CD4-positive, alpha-beta memory T cell (primary cell): ENCODE measurements at regions of chr14 and their contacts with region 1.

Region 1: DNA sequence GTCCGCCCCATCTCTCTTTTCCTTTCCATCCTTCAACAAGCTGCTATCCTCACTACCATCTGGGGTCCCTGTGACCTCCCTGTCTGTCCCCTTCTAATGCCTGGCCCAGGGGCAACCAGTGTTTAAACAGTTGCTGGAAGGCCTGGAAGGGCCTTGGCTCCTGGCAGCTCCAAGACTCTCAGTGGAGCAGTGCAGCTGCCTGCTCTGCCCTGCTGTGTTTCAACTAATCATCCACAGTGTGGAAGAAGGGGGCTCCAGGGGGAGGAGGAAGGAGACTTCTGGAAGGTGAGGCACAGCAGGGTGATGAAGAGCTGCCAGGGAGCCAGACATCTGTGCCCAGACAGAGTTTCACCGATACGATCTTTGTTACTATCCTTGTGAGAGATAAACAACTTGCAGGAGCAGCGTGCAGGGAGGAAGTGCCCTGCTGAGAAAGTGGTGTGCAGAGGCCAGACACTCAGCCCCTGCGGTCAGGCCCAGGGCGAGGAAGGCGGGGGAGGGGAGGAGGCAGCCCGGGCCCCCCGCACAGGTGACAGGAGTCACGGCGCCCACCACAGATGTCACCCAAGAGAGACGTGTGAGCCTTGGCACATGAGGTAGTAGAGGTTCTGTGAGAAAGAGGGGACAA is 1061.8 kb downstream of the BCL11B start:
- DNase-seq: peak in 3 of 5 donors; percentile 34 to 49 (median 36)
- H3K4me3 ChIP-seq: peak overlapping the region in 1 of 2 donors; percentile 27
- H3K4me3 Mint-ChIP-seq: peak overlapping the region; percentile 36 to 87 (median 80)
- H3K27ac ChIP-seq: peak overlapping the region; percentile 38
- H3K27ac Mint-ChIP-seq: peak overlapping the region; percentile 92 to 97 (median 96)
- H3K4me1 ChIP-seq: peaks cover 77% of the 10 kb centered on the region
- H3K4me1 Mint-ChIP-seq: peaks cover 68 to 92% (median 80%) of the 10 kb centered on the region in 4 donors
- H3K27me3 ChIP-seq: no peaks in the 10 kb centered on the region
- H3K27me3 Mint-ChIP-seq: no peaks in the 10 kb centered on the region

Region 2: GRCh38 chr14:98173305-98173704 is 36.9 kb before region 1 on chr14:
- CTCF ChIA-PET with region 1: no interaction called
- POLR2A ChIA-PET with region 1: interaction called, 10 read pairs
- intact Hi-C with region 1: no loop called
- DNase-seq: peak; percentile 74 to 80 (median 77)
- H3K4me3 ChIP-seq: peak overlapping the region in 1 of 2 donors; percentile 33
- H3K4me3 Mint-ChIP-seq: peak overlapping the region; percentile 75 to 87 (median 81)
- H3K27ac ChIP-seq: peak overlapping the region; percentile 64
- H3K27ac Mint-ChIP-seq: peak overlapping the region; percentile 86 to 99 (median 94)
- H3K4me1 ChIP-seq: peaks cover 100% of the 10 kb centered on the region
- H3K4me1 Mint-ChIP-seq: peaks cover 87 to 100% (median 93%) of the 10 kb centered on the region in 4 donors
- H3K27me3 ChIP-seq: no peaks in the 10 kb centered on the region
- H3K27me3 Mint-ChIP-seq: no peaks in the 10 kb centered on the region

Region 3: DNA sequence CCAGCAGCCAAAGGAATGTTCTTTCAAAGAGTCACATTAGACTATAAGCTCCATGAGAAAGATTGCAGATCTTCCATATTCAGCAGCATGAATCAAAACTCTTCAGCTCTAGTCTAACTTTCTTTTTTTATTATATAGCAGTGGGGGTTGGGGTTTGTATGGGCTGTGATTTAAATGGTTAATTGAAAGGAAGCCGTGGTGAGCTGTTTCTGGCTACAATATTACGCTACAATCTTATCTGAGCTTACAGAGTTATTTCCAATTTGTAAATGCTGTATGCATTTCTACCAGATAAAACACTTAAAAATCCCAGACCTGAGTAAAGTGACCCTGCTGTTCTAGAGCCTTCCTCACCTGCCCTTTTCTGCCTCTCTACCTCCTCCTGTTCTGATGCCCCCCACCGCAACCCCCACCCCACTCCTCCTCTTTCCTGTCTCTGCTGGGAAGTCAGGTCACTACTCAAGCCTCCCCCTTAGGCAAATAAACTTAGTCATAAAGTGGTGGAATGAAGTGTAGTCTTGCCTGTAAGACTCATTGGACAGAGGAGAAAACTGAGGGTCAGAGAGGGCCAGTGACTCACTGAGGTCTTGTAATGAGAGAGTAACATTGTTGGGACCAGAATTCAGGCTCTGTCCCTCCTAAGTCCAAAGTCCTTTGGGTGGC is 27.6 kb before region 1 on chr14:
- CTCF ChIA-PET with region 1: interaction called, 3 read pairs
- POLR2A ChIA-PET with region 1: interaction called, 85 read pairs
- intact Hi-C with region 1: no loop called
- DNase-seq: no peak
- H3K4me3 ChIP-seq: no peak overlapping the region
- H3K4me3 Mint-ChIP-seq: peak overlapping the region in 7 of 8 donors; percentile 44 to 78 (median 72)
- H3K27ac ChIP-seq: peak overlapping the region; percentile 13
- H3K27ac Mint-ChIP-seq: peak overlapping the region; percentile 84 to 98 (median 96)
- H3K4me1 ChIP-seq: peaks cover 97% of the 10 kb centered on the region
- H3K4me1 Mint-ChIP-seq: peaks cover 80 to 98% (median 89%) of the 10 kb centered on the region in 4 donors
- H3K27me3 ChIP-seq: no peaks in the 10 kb centered on the region
- H3K27me3 Mint-ChIP-seq: no peaks in the 10 kb centered on the region

Region 4: DNA sequence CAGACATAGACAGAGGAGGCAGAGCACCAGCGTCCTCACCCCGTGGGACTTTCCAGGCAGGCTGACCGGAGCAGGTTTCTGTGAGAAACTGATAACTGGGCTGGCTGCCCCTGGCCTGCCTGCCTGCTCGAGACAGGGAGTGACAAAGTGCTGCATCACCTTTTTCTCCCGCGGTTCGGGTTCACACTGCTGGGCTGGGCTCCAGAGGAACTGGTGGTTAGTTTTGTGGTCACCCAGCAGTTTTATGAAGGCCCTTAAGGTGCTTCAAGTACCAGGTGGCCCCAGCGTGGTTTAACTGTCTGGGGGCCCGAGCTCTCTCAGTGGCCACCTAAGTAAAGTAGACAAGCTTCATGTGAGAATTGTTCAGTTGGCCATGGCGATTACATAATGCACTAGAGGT is 11.8 kb before region 1 on chr14:
- CTCF ChIA-PET with region 1: interaction called, 8 read pairs
- POLR2A ChIA-PET with region 1: interaction called, 16 read pairs
- intact Hi-C with region 1: no loop called
- DNase-seq: peak in 4 of 5 donors; percentile 46 to 68 (median 48)
- H3K4me3 ChIP-seq: peak overlapping the region in 1 of 2 donors; percentile 12
- H3K4me3 Mint-ChIP-seq: peak overlapping the region in 7 of 8 donors; percentile 45 to 81 (median 72)
- H3K27ac ChIP-seq: peak overlapping the region; percentile 12
- H3K27ac Mint-ChIP-seq: peak overlapping the region; percentile 78 to 88 (median 84)
- H3K4me1 ChIP-seq: peaks cover 81% of the 10 kb centered on the region
- H3K4me1 Mint-ChIP-seq: peaks cover 67 to 94% (median 75%) of the 10 kb centered on the region in 4 donors
- H3K27me3 ChIP-seq: no peaks in the 10 kb centered on the region
- H3K27me3 Mint-ChIP-seq: no peaks in the 10 kb centered on the region

Region 5: DNA sequence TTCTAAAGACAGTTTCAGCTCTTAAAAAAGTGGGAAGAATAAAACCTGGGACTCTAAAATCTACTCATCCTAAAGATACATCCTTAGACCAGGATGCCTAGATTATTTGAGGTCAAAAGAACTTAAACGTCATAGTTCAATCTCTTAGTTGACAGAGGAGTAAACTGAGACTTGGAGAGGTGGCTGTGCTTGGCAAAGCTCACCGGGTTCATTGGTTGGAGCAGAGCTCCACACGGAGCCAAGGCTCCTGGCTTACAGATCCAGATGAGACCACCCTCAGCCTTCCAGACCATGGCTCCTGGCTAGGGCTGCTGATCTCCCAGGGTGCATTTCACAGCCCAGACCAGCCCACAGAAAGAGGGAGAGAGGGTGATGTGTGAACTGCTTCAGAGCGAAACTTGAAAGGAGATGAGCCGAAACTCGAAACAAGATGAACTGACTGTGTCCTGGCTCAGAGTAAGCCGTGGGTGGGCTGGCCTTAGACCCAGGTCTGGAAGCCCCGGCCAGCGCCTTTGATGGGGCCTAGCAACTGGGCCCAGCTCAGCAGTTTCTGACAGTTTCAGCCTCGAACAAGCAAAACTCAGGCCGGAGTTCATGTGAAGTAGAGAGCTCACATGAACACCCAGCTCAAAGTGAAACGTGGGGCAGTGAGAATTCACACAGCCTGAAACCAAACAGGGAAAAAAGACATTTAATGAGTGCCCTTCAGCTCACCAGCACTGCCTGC is 17.0 kb after region 1 on chr14:
- CTCF ChIA-PET with region 1: interaction called, 11 read pairs
- POLR2A ChIA-PET with region 1: interaction called, 6 read pairs
- intact Hi-C with region 1: loop called (anchors 1 kb)
- DNase-seq: peak in 3 of 5 donors; percentile 22 to 24 (median 24)
- H3K4me3 ChIP-seq: peak overlapping the region in 1 of 2 donors; percentile 24
- H3K4me3 Mint-ChIP-seq: peak overlapping the region; percentile 56 to 89 (median 71)
- H3K27ac ChIP-seq: peak overlapping the region; percentile 55
- H3K27ac Mint-ChIP-seq: peak overlapping the region; percentile 89 to 97 (median 90)
- H3K4me1 ChIP-seq: peaks cover 96% of the 10 kb centered on the region
- H3K4me1 Mint-ChIP-seq: peaks cover 67 to 88% (median 77%) of the 10 kb centered on the region in 4 donors
- H3K27me3 ChIP-seq: no peaks in the 10 kb centered on the region
- H3K27me3 Mint-ChIP-seq: no peaks in the 10 kb centered on the region